PC-9 (cell line): ENCODE measurements at regions of chr4 and their contacts with region 1.

Region 1: GRCh38 chr4:74531963-74532794 is 87.2 kb downstream of the AREG start:
- DNase-seq: peak in 1 of 2 experiments; percentile 25
- H3K4me3 ChIP-seq: no peak overlapping the region
- H3K27ac ChIP-seq: 0 out of 2 replicates have a peak overlapping the region, but pooled peaks have one; percentile 38
- H3K4me1 ChIP-seq: no peaks in the 10 kb centered on the region
- H3K27me3 ChIP-seq: no peaks in the 10 kb centered on the region
- CTCF ChIP-seq: peak; percentile 50; the same call in 1 of the 2 replicates

Region 2: GRCh38 chr4:74189331-74190043 is 342.7 kb before region 1 on chr4:
- CTCF ChIA-PET with region 1: no interaction called
- POLR2A ChIA-PET with region 1: no interaction called
- intact Hi-C with region 1: loop called (anchors 10 kb)
- DNase-seq: peak in 1 of 2 experiments; percentile 53
- H3K4me3 ChIP-seq: no peak overlapping the region
- H3K27ac ChIP-seq: no peak overlapping the region
- H3K4me1 ChIP-seq: no peaks in the 10 kb centered on the region
- H3K27me3 ChIP-seq: no peaks in the 10 kb centered on the region
- CTCF ChIP-seq: peak; percentile 69

Region 3: DNA sequence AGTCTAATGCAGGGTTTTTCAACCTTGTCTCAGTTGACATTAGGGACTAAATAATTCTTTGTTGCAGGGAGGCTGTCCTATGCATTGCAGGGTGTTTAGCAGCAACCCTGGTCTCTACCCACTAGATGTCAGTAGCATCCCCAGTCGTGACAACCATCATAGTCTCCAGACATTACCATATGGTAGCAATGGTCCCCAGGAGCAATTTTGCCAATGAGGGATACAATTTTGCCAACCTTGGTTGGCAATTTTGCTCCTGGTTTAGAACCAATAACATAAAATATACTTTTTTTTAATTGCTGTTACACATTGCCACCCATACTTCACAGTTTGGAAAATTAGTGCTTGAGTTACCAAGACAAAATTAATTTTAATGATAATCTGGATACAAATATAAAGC is 161.3 kb before region 1 on chr4:
- CTCF ChIA-PET with region 1: interaction called, 3 read pairs
- POLR2A ChIA-PET with region 1: no interaction called
- intact Hi-C with region 1: loop called (anchors 2 kb)
- DNase-seq: peak in 1 of 2 experiments; percentile 41
- H3K4me3 ChIP-seq: no peak overlapping the region
- H3K27ac ChIP-seq: 0 out of 2 replicates have a peak overlapping the region, but pooled peaks have one; percentile 19
- H3K4me1 ChIP-seq: peaks cover 44% of the 10 kb centered on the region
- H3K27me3 ChIP-seq: no peaks in the 10 kb centered on the region
- CTCF ChIP-seq: peak; percentile 59

Region 4: GRCh38 chr4:74376888-74377483 is 155.2 kb before region 1 on chr4:
- CTCF ChIA-PET with region 1: interaction called, 5 read pairs
- POLR2A ChIA-PET with region 1: no interaction called
- intact Hi-C with region 1: loop called (anchors 1 kb)
- DNase-seq: no peak
- H3K4me3 ChIP-seq: peak overlapping the region; percentile 55; the same call in 1 of the 2 replicates
- H3K27ac ChIP-seq: peak overlapping the region; percentile 100
- H3K4me1 ChIP-seq: peaks cover 33% of the 10 kb centered on the region
- H3K27me3 ChIP-seq: no peaks in the 10 kb centered on the region
- CTCF ChIP-seq: peak; percentile 70

Region 5: GRCh38 chr4:74444891-74445642 is 87.1 kb before region 1 on chr4 and contains the start of gene AREG:
- CTCF ChIA-PET with region 1: interaction called, 4 read pairs
- POLR2A ChIA-PET with region 1: no interaction called
- intact Hi-C with region 1: loop called (anchors 5 kb)
- DNase-seq: peak; percentile 43 to 70
- H3K4me3 ChIP-seq: peak within 1 kb of the TSS; percentile 85
- H3K27ac ChIP-seq: peak within 1 kb of the TSS; percentile 63
- H3K4me1 ChIP-seq: peaks cover 13% of the 10 kb centered on the region
- H3K27me3 ChIP-seq: no peaks in the 10 kb centered on the region
- CTCF ChIP-seq: peak; percentile 69; the same call in 1 of the 2 replicates
- total RNA-seq, gene AREG: 4.5 and 6.4 TPM in 2 replicates

Region 6: DNA sequence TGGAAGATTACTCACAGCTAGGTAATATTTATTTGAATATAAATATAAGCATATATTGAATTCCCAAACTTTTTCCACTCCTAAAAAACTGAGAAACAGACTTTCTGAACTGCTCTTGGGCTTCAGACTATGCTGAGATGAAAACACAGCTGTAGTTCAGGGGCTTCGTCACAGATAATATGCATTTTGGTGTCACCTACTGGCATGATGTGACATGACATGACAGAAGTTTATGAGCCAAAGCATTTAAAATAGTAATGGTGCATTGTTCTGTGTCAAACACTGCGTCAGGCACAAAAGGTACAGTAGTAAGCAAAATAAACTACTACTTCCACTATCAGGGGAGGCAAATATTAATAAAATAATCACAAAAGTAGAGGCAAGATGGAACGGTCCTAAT is 90.9 kb after region 1 on chr4:
- CTCF ChIA-PET with region 1: no interaction called
- POLR2A ChIA-PET with region 1: interaction called, 5 read pairs
- intact Hi-C with region 1: loop called (anchors 2 kb)
- DNase-seq: no peak
- H3K4me3 ChIP-seq: no peak overlapping the region
- H3K27ac ChIP-seq: peak overlapping the region; percentile 83
- H3K4me1 ChIP-seq: peaks cover 28% of the 10 kb centered on the region
- H3K27me3 ChIP-seq: no peaks in the 10 kb centered on the region
- CTCF ChIP-seq: peak; percentile 55

Region 7: DNA sequence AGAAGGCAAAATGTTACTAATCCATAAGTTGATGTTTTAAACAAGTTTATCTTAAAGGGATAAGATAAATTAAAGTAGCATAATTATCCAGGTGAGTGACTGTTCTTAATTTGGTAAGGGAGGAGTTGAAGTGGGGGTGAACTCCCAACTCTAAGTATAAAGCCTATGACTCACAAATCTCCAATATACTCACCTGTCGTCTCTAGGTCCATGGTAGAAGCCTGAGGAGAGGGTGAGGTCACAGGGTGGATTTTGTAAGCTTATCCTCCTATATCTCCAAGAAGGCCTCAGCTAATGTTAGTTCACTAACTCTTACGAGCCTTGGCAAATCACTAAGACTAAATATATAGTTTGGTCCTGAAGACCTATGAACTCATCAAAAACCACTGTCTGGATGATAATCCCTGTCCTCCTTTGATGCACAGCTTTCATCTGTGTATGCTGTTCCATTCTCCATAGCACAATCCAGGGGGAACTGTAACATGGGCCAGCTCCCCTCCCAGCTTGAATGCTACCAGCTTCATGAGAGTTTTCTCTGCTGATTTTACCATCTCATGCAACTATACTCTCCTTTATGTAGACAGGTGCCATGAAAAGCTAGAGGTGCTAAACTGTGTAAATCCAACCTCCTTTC is 103.4 kb after region 1 on chr4:
- CTCF ChIA-PET with region 1: no interaction called
- POLR2A ChIA-PET with region 1: no interaction called
- intact Hi-C with region 1: no loop called
- DNase-seq: peak in 1 of 2 experiments; percentile 42
- H3K4me3 ChIP-seq: no peak overlapping the region
- H3K27ac ChIP-seq: no peak overlapping the region
- H3K4me1 ChIP-seq: peaks cover 14% of the 10 kb centered on the region
- H3K27me3 ChIP-seq: no peaks in the 10 kb centered on the region
- CTCF ChIP-seq: no peak